ENCODE measurements at regions of chr19 and their contacts with region 1.

Region 1: DNA sequence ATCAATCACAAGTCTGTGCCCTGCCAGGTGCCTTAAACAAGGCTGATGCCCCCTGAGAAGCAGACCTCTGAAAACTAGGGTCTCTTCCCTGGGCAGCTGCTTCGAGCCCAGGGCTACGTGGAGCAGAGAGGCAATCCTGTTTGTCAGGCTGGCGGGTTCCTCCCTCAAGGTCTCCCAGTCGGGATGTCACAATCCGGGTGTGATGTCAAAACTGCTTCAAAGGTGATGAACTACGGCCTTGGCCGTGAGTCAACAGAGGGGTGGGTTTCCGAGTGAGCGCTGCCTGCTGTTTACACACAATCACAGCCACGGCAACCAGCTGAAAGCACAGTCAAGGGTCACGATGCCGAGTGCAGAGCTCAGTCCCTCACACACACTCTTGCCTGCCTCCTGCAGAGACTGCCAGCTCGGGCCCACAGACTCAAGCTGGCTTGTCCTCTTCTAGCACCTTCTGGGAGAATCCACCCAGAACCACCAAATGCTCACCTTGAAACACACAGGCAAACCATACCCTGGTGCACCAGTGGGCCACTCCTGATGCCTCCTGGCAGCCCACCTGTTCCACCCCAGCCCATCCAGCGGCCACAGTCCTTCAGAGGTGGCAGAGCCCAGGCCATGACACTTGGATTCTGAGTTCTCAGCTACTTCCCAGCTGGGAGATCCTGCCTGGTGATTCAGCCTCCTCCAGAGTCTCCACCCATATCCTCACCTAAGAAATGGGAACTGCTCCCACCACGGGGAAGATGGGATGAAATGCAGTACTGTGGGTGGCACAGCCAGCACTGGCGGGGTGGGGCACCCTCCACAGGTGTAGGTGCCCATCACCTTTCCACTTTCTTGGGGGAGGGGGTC is 6.8 kb downstream of the ELL start:
- DNase-seq: no peak
- H3K4me3 ChIP-seq: no peak overlapping the region
- H3K27ac ChIP-seq: peak overlapping the region; percentile 77
- H3K4me1 ChIP-seq: peaks cover 96% of the 10 kb centered on the region
- H3K27me3 ChIP-seq: no peaks in the 10 kb centered on the region
- CTCF ChIP-seq: no peak
- POLR2A ChIP-seq: no peak

Region 2: DNA sequence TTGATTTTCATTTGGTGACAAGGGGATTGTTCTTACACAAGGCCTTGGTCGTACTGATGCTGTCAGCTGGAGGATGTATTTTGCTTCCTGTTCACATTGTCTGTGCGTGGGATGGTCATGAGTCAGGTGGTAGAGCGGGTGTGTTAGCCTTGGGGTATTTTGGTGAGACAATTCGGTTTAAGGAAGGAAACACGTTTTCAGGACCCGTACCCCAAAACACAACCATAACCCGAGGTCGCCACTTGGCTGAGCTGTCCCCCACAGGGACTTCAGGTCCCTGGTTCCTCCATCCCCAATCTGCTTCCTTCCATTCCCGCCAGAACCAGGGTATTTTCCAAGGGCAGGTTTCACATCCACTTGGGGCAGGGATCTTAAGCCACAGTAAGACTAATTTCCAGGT is 1424.4 kb before region 1 on chr19:
- intact Hi-C with region 1: loop called (anchors 5 kb)
- DNase-seq: no peak
- H3K4me3 ChIP-seq: no peak overlapping the region
- H3K27ac ChIP-seq: peak overlapping the region; percentile 86
- H3K4me1 ChIP-seq: peaks cover 78% of the 10 kb centered on the region
- H3K27me3 ChIP-seq: no peaks in the 10 kb centered on the region
- CTCF ChIP-seq: no peak
- POLR2A ChIP-seq: no peak

Region 3: DNA sequence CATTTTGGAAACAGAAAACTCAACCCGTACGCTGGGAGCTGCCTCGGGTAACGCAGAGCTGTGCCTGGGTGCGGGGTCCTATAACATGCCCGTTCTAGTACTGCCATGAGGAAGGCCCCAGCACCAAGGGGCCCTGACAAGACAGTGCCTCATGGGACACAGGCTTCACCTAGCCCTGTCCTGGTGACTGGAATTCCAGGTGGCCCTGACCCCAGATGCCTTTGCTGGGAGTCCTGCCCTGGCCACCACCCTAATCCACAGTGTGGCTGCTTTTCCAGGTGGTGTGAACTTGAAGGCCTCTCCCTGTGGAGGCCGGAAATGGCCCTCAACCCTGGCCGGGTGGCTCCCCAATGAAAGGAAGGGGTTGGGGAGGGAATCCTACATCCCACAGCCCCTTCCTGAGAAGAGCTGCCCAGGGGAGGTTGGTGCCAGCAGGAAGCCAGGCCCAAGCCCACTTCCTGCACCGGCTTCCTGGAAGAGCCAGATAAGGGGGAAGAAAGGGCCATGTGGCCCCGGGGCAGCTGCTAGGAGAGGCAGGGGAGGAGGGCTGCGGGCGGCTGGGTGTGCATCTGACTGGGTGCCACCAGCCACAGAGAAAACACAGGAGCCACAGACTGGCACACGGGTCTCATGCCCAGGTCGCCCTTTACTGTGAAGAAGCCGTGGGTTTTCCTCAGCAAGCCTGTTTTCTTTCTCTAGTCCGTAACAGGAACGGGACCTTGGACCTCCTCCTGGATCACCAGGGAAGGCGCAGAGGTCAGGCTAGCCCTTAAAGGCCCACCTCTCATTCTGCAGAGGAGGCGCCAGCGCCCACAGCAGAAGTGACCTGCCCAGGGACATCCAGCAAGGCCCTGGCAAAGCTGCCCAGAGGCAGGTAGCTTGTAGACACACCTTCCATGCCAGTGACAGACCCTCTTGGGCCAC is 196.8 kb before region 1 on chr19:
- intact Hi-C with region 1: no loop called
- DNase-seq: no peak
- H3K4me3 ChIP-seq: no peak overlapping the region
- H3K27ac ChIP-seq: peak overlapping the region; percentile 42
- H3K4me1 ChIP-seq: peaks cover 35% of the 10 kb centered on the region
- H3K27me3 ChIP-seq: no peaks in the 10 kb centered on the region
- CTCF ChIP-seq: no peak
- POLR2A ChIP-seq: no peak

Measured in vagina (tissue), 2 donors.